GM12878 (cell line): ENCODE measurements at regions of chr15 and their contacts with region 1.

Region 1: DNA sequence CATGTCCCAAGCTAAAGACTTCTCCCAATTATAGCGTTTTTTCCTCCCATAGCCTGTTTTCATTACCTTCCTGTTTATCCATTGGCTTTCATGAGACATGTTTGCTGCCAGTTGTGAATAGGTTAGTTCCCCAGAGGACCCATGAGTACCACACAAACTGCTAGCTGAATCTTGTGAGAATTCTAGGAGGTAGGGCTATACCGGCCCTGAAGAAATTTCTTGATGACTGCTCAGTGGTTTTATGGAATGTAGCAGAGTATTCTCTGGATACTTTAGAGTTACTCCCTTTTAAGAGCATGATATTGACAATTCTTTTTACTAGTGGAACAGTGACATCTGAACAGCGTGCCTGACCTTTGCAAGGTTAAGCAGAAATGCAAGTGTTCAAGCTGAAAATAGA is 210.4 kb downstream of the MCTP2 start:
- DNase-seq: no peak
- ATAC-seq: no peak
- H3K4me3 ChIP-seq: no peak overlapping the region
- H3K27ac ChIP-seq: no peak overlapping the region
- H3K4me1 ChIP-seq: no peaks in the 10 kb centered on the region
- H3K27me3 ChIP-seq: no peaks in the 10 kb centered on the region
- CTCF ChIP-seq: no peak
- EP300 ChIP-seq: no peak
- POLR2A ChIP-seq: no peak
- RAD21 ChIP-seq: no peak

Region 2: DNA sequence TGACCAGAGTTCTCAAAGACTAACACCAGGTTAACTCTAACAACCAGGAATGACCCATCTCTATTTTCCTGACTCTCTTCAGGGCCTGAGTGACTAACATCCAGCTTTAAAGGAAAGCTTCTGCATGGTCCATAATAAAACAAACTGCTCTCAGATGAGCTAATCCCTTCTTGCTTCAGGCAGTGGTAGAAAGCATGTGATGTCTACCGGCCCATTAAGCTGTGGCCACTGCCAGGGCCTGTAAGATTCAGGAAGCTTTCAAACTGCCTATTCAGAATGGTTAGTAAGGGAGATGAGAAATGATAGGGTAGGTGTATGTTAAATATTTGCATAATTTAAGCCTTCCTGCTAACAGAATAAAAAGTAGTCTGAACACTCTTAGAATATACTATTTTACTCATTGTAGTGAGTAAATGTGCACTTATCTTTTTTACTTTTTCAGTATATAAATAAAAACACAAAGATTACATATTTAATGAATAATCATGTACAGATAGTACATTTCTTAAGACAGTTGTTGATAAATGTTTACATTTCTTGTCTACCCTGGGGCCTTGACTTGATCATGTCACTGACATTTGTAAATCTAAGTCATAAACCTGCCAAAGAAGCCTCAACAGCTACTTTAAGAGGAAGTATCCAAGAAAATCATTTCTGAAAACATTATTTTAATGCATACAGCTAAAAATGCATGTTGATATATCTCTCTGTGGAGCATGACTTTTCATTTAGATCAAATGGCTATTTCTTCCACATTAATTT is 11.6 kb after region 1 on chr15:
- CTCF ChIA-PET with region 1: interaction called, 3 read pairs
- POLR2A ChIA-PET with region 1: interaction called, 10 read pairs
- RAD21 ChIA-PET with region 1: no interaction called
- SMC1A ChIA-PET with region 1: no interaction called
- in situ Hi-C with region 1: no loop called
- intact Hi-C with region 1: no loop called
- DNase-seq: no peak
- ATAC-seq: no peak
- H3K4me3 ChIP-seq: no peak overlapping the region
- H3K27ac ChIP-seq: no peak overlapping the region
- H3K4me1 ChIP-seq: no peaks in the 10 kb centered on the region
- H3K27me3 ChIP-seq: no peaks in the 10 kb centered on the region
- CTCF ChIP-seq: no peak
- EP300 ChIP-seq: no peak
- POLR2A ChIP-seq: no peak
- RAD21 ChIP-seq: no peak